Naive thymus-derived CD4-positive, alpha-beta T cell (primary cell): ENCODE measurements at regions of chr1 and their contacts with region 1.

Region 1: DNA sequence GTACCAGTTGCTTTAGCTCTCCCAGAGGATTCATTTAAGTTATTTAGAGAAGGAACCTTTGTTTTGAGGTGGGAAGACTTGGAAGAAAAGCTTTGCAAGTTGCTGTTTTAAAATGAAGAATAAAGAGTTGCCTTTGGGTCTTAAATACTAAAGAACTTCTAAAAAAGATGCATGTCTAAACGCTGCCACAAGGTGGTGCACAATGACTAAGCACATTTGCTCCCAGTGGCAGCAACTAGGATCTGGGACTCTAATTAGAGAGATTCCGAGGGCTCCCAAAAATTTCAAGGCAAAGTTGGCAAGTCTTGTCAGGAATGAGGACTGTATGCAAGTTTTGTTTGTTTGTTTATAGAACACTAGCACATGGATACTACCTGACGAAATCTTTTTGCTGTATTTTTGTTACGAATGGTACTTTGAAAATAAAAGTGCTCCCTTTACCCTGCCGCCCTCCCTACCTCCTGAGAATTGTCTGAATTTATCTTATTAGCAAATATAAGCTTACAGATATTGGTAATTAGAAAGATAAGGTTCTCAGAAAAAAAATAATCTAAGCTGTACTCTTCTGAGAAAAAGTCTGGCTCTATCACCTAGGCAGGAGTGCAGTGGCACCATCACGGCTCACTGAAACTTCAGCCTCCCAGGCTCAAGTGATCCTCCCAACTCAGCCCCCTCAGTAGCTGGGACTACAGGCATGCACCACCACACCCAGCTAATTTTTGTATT is 121.8 kb downstream of the HFM1 start:
- DNase-seq: peak in 8 of 9 donors; percentile 2 to 34 (median 22)
- ATAC-seq: peak; percentile 60
- H3K4me3 ChIP-seq: no peak overlapping the region
- H3K4me3 Mint-ChIP-seq: no peak overlapping the region
- H3K27ac ChIP-seq: no peak overlapping the region
- H3K27ac Mint-ChIP-seq: no peak overlapping the region
- H3K4me1 ChIP-seq: no peaks in the 10 kb centered on the region
- H3K4me1 Mint-ChIP-seq: no peaks in the 10 kb centered on the region
- H3K27me3 ChIP-seq: no peaks in the 10 kb centered on the region
- H3K27me3 Mint-ChIP-seq: peaks cover 4 to 13% (median 7%) of the 10 kb centered on the region in 5 donors

Region 2: DNA sequence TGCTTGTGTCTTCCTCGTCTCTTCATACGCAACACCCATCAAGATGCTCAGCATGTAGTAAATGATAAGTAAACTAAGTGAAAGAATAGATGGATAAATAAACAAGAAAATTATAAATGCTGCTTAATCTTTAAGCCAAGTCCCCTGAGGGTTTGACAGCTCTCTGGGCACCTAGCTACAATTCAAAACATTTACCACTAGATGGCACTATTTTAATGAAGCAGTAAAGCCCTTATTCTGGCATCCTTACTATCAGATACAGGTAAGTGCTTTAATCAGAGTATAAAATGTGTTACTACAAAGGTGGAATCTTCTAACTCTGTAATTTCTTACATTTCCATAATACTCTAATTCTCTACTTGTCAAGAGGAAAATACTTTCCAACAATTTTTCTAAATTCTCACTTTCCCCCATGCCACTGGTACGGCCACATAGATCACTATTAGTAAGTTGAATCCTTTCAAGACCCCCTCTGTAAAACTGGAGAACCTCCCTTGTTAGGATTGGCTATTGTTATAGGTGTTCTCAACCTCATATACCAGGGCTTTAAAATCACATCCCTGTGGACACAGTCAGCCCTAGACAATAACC is 703.6 kb before region 1 on chr1:
- CTCF ChIA-PET with region 1: no interaction called
- POLR2A ChIA-PET with region 1: no interaction called
- intact Hi-C with region 1: loop called (anchors 2 kb)
- DNase-seq: peak in 6 of 9 donors; percentile 12 to 49 (median 34)
- ATAC-seq: no peak
- H3K4me3 ChIP-seq: no peak overlapping the region
- H3K4me3 Mint-ChIP-seq: no peak overlapping the region
- H3K27ac ChIP-seq: no peak overlapping the region
- H3K27ac Mint-ChIP-seq: no peak overlapping the region
- H3K4me1 ChIP-seq: no peaks in the 10 kb centered on the region
- H3K4me1 Mint-ChIP-seq: no peaks in the 10 kb centered on the region
- H3K27me3 ChIP-seq: no peaks in the 10 kb centered on the region
- H3K27me3 Mint-ChIP-seq: peaks cover 0 to 7% (median 4%) of the 10 kb centered on the region in 5 donors

Region 3: DNA sequence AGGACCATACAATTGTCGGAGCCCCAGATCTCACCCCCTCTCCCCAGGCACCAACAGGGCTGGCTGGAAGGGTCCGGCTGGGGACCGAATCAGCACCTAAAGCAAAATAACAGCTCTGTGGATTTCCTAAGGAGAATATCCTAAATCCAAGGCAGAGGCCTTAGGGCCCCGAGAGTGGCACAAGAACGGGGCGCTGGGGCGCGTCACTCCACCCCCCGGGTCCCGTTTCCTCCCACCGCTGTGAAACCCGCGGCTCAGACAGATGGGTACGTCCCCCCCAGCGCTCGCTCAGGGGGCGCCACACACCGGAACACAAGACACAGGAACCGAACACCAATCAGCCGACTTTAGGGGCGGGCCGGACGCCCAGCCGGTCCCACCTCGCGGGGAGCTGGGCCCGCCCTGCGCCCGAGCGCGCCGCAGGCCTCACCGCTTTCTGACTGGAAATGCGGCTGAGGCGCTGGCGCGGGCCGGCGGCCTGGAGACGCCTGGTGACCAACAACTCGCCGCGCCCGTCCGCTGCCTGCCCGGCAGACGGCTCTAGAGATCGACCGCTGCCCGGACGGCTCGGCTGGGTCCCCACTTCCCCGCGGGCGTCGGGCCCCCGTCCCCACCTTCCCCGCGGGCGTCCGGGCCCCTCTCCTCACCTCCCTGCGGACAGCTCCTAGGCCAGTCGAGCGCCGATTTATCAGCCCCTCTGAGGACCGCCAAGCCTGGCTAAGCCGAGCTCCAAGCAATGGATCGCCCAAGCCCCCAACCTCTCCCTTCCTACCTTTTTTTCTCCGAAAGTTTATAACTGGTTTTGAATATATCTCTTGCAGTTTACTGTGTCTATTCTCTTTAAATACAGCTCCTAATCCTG is 121.5 kb after region 1 on chr1 and contains the start of gene HFM1:
- CTCF ChIA-PET with region 1: no interaction called
- POLR2A ChIA-PET with region 1: no interaction called
- intact Hi-C with region 1: loop called (anchors 1 to 5 kb)
- DNase-seq: peak; percentile 12 to 48 (median 38)
- ATAC-seq: peak; percentile 90
- H3K4me3 ChIP-seq: peak within 1 kb of the TSS; percentile 16
- H3K4me3 Mint-ChIP-seq: peak within 1 kb of the TSS; percentile 68 to 85 (median 79)
- H3K27ac ChIP-seq: peak within 1 kb of the TSS; percentile 29
- H3K27ac Mint-ChIP-seq: peak within 1 kb of the TSS in 4 of 9 donors; percentile 14 to 92 (median 36)
- H3K4me1 ChIP-seq: peaks cover 0 to 6% of the 10 kb centered on the region in 2 donors
- H3K4me1 Mint-ChIP-seq: peaks cover 0 to 14% (median 7%) of the 10 kb centered on the region in 7 donors
- H3K27me3 ChIP-seq: peaks cover 0 to 3% of the 10 kb centered on the region in 2 donors
- H3K27me3 Mint-ChIP-seq: peaks cover 27 to 74% (median 57%) of the 10 kb centered on the region in 5 donors
- total RNA-seq, gene HFM1: not detected

Region 4: DNA sequence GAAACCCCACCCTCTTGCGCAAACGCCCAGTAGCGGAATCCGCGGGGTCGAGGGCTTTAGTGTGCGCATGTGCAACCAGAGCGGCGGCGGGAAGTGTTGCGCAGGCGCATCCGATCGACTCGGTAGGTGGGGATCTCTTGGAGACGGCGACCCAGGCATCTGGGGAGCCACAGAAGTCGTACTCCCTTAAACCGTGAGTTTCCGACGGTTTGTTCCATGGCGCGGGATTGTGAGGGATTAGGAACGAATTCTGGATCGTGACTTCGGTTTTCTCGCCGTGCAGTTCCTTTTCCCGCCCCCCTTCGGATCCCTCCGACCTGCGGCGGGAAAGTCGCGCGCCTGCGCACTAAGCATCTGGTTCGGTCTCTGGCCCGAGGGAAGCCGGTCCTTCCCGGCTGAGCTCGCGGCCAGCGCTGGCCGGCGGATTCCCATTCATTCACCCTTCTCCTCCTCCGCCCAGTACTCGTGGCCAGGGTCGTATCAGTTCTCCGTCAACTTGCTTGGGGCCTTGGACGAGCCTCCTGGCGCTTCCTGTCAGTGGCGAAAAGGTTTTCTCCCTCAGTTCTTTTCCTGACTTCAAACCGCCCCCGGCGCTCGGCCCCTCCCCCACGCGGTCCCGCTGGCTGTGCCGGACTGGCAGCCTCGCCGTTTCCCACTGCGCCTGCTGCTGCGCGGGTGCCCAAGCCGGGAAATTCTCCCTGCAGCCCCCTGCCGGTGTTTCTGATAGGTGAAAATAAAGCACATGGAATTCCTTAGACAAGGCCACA is 218.1 kb after region 1 on chr1 and contains the start of gene CDC7:
- CTCF ChIA-PET with region 1: no interaction called
- POLR2A ChIA-PET with region 1: no interaction called
- intact Hi-C with region 1: loop called in 1 of 2 experiments (anchors 5 kb)
- DNase-seq: peak; percentile 67 to 86 (median 79)
- ATAC-seq: peak; percentile 85
- H3K4me3 ChIP-seq: peak within 1 kb of the TSS; percentile 97
- H3K4me3 Mint-ChIP-seq: no peak within 1 kb of the TSS
- H3K27ac ChIP-seq: peak within 1 kb of the TSS; percentile 85
- H3K27ac Mint-ChIP-seq: no peak within 1 kb of the TSS
- H3K4me1 ChIP-seq: peaks cover 0 to 11% of the 10 kb centered on the region in 2 donors
- H3K4me1 Mint-ChIP-seq: peaks cover 14 to 34% (median 18%) of the 10 kb centered on the region in 7 donors
- H3K27me3 ChIP-seq: no peaks in the 10 kb centered on the region
- H3K27me3 Mint-ChIP-seq: no peaks in the 10 kb centered on the region
- total RNA-seq, gene CDC7: 5.3 to 17.9 (median 5.9) TPM

Region 5: DNA sequence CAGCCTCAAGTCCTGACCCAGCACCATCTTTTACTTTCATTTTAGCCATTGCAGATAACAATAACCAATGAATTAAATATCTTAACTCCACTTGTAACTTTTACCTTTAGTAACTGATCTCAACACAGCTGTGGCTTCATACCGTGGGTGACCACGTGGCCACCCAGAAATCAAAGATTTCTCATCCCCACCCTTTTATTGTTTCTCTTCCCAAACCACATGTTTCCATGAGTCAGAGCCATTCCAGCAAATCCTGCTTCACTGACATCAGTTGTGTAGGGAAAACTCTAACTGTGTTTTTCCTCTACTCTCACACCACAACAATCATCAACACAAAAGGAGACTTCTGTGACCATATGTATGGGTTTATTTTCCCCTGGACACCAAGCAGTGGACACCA is 641.3 kb after region 1 on chr1:
- CTCF ChIA-PET with region 1: interaction called, 8 read pairs
- POLR2A ChIA-PET with region 1: no interaction called
- intact Hi-C with region 1: loop called (anchors 1 kb)
- DNase-seq: no peak
- ATAC-seq: no peak
- H3K4me3 ChIP-seq: no peak overlapping the region
- H3K4me3 Mint-ChIP-seq: no peak overlapping the region
- H3K27ac ChIP-seq: no peak overlapping the region
- H3K27ac Mint-ChIP-seq: no peak overlapping the region
- H3K4me1 ChIP-seq: peaks cover 0 to 3% of the 10 kb centered on the region in 2 donors
- H3K4me1 Mint-ChIP-seq: peaks cover 0 to 7% (median 0%) of the 10 kb centered on the region in 7 donors
- H3K27me3 ChIP-seq: no peaks in the 10 kb centered on the region
- H3K27me3 Mint-ChIP-seq: peaks cover 0 to 3% (median 0%) of the 10 kb centered on the region in 5 donors

Region 6: DNA sequence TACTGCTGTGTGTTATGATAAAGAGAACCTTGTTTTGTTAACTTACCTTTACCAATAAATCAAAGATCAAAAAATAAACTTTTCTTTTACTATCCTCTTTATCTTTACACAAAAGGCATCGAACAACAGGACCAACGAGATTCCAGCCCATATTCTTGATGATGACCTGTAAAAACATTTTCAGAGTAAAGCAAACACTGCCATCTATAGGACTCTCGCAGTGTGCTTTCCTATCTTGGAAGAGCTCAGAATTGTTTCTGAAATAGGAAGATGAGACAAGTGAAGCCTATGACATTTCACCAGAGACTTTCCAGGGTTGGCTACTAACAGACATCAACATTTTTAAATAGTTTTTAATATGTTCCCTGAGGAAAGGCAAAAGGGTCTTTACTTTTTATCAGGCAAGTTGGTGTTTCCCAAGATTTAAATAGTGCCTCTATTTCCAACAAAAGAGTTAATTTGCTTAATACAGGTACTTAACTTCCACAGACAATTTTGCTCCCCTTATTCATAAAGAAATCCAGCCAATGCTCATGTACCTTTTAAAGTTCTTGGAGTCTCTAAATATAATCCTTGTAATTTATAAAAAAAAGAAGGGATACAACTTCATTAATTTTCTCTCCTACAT is 1008.6 kb after region 1 on chr1:
- CTCF ChIA-PET with region 1: no interaction called
- POLR2A ChIA-PET with region 1: no interaction called
- intact Hi-C with region 1: loop called (anchors 5 kb)
- DNase-seq: peak in 4 of 9 donors; percentile 5 to 45 (median 41)
- ATAC-seq: peak; percentile 65
- H3K4me3 ChIP-seq: no peak overlapping the region
- H3K4me3 Mint-ChIP-seq: no peak overlapping the region
- H3K27ac ChIP-seq: no peak overlapping the region
- H3K27ac Mint-ChIP-seq: no peak overlapping the region
- H3K4me1 ChIP-seq: no peaks in the 10 kb centered on the region
- H3K4me1 Mint-ChIP-seq: peaks cover 18 to 31% (median 24%) of the 10 kb centered on the region in 7 donors
- H3K27me3 ChIP-seq: no peaks in the 10 kb centered on the region
- H3K27me3 Mint-ChIP-seq: no peaks in the 10 kb centered on the region

Region 7: GRCh38 chr1:92623187-92623778 is 1340.4 kb after region 1 on chr1:
- CTCF ChIA-PET with region 1: no interaction called
- POLR2A ChIA-PET with region 1: no interaction called
- intact Hi-C with region 1: loop called in 1 of 2 experiments (anchors 2 kb)
- DNase-seq: peak in 6 of 9 donors; percentile 4 to 42 (median 35)
- ATAC-seq: peak; percentile 49
- H3K4me3 ChIP-seq: no peak overlapping the region
- H3K4me3 Mint-ChIP-seq: no peak overlapping the region
- H3K27ac ChIP-seq: no peak overlapping the region
- H3K27ac Mint-ChIP-seq: no peak overlapping the region
- H3K4me1 ChIP-seq: no peaks in the 10 kb centered on the region
- H3K4me1 Mint-ChIP-seq: no peaks in the 10 kb centered on the region
- H3K27me3 ChIP-seq: no peaks in the 10 kb centered on the region
- H3K27me3 Mint-ChIP-seq: peaks cover 0 to 4% (median 0%) of the 10 kb centered on the region in 5 donors